H1 (cell line): ENCODE measurements at regions of chr7 and their contacts with region 1.

Region 1: DNA sequence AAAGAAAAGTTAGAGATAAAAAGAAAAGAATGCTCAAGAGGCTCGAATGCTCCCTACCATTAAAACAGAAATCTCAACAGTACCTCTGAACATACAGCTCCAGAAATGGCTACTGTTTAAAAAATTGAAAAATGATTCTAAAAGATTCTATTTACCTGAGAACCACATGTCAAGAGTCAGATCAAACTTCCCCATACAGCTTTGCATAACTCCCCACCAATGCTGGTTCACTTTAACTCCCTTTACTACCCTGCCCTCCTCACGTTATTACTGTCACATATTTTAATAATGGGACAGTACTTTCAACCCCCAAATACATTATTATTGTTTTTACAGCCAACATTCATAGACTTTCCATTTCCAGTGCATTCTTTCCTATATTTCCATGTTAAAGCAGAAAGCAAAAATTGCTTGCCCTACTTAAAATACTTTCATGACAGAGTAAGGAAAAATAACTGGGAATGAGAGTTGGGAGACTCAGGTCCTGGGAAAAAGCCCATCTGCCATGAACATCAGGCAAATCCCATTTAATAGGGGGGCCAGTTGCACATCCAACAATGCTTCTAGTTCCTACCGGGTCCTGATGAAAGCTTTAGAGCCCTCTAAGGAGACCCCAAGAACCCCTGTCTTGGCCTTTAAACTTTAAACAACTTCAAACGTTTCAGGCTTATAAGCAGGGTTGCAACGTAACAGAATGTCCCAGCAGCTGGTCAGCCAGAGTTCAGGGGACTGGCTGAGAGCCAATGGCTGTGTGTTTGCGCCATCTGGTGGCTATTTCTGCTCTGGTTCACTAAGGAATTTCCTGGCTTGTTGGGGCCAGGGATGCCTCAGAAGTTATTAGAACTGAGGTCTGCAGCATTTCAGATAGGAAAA is 247.4 kb downstream of the ELMO1 start:
- DNase-seq: peak in 1 of 2 experiments; percentile 88
- H3K4me3 ChIP-seq: no peak overlapping the region
- H3K27ac ChIP-seq: no peak overlapping the region
- H3K4me1 ChIP-seq: no peaks in the 10 kb centered on the region; a peak in 1 of 7 replicates
- H3K27me3 ChIP-seq: no peaks in the 10 kb centered on the region
- CTCF ChIP-seq: peak; percentile 81 to 92 (median 86)
- EP300 ChIP-seq: no peak
- POLR2A ChIP-seq: no peak
- RAD21 ChIP-seq: peak; percentile 86 to 92

Region 2: DNA sequence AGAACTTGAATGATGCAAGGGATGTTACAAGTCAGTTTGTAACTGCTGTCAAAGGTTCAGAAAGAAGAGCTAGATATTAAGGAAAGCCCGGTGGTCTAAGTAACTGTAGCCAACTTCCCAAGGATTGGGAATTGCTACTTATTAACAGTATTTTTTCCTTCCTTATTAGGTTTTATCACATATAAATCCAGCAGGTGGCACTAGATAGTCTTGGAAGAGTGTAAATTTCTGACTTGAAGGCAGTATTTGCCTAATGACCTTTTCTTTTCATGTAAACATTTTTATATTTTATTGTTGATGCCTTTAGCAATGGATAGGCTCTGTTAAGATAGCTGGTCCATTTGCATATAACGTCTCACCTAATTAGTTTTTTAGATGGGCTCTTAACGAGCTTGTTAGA is 760.4 kb before region 1 on chr7:
- CTCF ChIA-PET with region 1: interaction called, 14 read pairs
- POLR2A ChIA-PET with region 1: no interaction called
- DNase-seq: no peak
- H3K4me3 ChIP-seq: no peak overlapping the region
- H3K27ac ChIP-seq: no peak overlapping the region
- H3K4me1 ChIP-seq: peaks cover 0 to 4% (median 0%) of the 10 kb centered on the region in 4 experiments; a peak in 2 of 7 replicates
- H3K27me3 ChIP-seq: no peaks in the 10 kb centered on the region
- CTCF ChIP-seq: peak in 1 of 3 experiments; percentile 45; a peak in 2 of 4 replicates
- EP300 ChIP-seq: no peak
- POLR2A ChIP-seq: no peak
- RAD21 ChIP-seq: peak in 1 of 2 experiments; percentile 33; a peak in 3 of 4 replicates

Region 3: DNA sequence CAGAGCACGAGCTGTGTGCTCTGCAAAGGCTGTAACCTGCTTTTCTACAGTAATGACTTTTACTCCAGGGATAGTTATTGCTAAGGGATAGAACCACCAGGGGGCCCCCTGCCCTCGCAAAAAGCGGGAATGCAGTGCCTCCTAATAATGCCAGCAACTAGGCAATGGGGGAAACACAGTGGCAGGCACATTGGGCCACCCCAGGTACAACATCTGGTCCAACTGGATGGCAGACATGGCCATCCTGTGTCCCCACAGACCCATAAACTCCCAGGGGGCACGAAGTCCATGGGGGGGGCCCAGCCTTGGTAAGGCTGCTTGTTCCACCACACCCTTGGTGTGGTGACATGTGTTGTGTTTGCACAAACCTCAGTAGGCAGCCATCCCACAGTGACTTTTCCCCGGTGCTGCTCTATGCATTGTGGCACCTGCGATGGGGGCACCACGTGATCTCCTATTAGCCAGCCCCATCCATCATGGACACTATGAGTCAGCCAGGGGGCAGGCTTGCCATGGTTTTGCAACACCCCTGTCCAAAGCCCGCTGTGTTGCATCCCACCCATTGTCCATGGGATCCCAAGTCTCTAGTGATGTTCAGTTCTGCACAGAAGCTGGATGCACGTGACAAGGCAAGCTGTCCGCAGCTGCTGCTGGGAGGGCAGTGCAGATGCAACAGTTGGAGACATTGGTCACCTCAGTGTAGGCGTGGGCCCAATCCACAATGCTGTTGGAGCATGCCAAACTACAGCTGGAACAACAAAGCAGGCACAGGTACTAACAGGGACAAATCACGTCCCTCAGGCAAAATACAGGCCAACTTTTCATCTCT is 727.6 kb before region 1 on chr7:
- CTCF ChIA-PET with region 1: interaction called, 14 read pairs
- POLR2A ChIA-PET with region 1: no interaction called
- DNase-seq: peak in 1 of 2 experiments; percentile 89
- H3K4me3 ChIP-seq: no peak overlapping the region
- H3K27ac ChIP-seq: no peak overlapping the region
- H3K4me1 ChIP-seq: no peaks in the 10 kb centered on the region
- H3K27me3 ChIP-seq: no peaks in the 10 kb centered on the region
- CTCF ChIP-seq: peak; percentile 57 to 77 (median 71)
- EP300 ChIP-seq: no peak
- POLR2A ChIP-seq: no peak
- RAD21 ChIP-seq: peak; percentile 90 to 93

Region 4: DNA sequence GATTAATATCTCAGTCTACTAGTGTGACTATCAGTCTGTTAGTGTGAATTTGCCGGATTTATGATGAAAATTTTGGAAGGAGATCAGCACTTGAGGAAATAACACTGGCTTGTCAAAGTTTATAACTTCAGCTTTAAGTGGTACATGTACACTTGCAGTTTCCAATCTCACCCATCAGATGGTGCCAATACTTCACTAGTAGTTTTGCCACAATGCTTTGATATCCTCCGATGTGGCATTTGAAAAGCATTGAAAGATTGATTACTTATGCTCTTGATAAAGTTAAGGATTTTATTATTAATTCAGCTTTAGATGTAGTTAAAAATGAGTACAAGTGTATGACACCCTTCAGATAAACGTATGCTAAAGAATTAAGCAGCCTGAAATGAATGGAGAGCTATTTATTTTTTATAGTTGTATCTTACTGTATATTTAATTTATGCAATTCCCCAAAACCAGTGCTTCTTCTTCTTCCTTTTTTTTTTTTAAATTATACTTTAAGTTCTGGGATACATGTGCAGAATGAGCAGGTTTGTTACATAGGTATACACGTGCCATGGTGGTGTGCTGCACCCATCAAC is 713.4 kb before region 1 on chr7:
- CTCF ChIA-PET with region 1: interaction called, 11 read pairs
- POLR2A ChIA-PET with region 1: no interaction called
- DNase-seq: no peak
- H3K4me3 ChIP-seq: no peak overlapping the region
- H3K27ac ChIP-seq: no peak overlapping the region
- H3K4me1 ChIP-seq: no peaks in the 10 kb centered on the region
- H3K27me3 ChIP-seq: no peaks in the 10 kb centered on the region
- CTCF ChIP-seq: peak in 2 of 3 experiments; percentile 69 to 78; a peak in 3 of 4 replicates
- EP300 ChIP-seq: no peak
- POLR2A ChIP-seq: no peak
- RAD21 ChIP-seq: peak; percentile 96

Region 5: DNA sequence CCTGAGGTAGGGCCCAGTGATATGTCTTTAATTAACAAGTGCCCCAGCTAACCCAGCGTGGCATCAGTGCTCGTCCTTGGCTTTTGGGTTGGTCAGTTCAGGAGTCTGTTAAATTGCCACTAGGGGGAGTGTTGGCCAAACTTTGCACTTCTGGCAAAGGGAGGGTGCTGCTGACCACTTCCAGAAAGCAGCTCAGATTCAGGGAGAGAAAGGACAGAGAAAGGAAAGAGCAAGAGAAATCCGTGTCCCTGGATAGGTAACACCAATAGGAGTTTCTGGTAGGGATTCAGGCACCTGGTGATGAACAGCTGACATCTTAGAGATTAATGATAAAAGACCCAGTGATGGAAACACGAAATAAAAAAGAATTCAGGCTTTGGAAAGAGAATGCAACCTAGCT is 233.9 kb before region 1 on chr7:
- CTCF ChIA-PET with region 1: interaction called, 12 read pairs
- POLR2A ChIA-PET with region 1: no interaction called
- DNase-seq: peak in 1 of 2 experiments; percentile 47
- H3K4me3 ChIP-seq: no peak overlapping the region
- H3K27ac ChIP-seq: no peak overlapping the region
- H3K4me1 ChIP-seq: peaks cover 0 to 6% (median 2%) of the 10 kb centered on the region in 4 experiments; a peak in 4 of 7 replicates
- H3K27me3 ChIP-seq: no peaks in the 10 kb centered on the region
- CTCF ChIP-seq: peak; percentile 69 to 89 (median 85)
- EP300 ChIP-seq: no peak
- POLR2A ChIP-seq: no peak
- RAD21 ChIP-seq: peak; percentile 83 to 89

Region 6: DNA sequence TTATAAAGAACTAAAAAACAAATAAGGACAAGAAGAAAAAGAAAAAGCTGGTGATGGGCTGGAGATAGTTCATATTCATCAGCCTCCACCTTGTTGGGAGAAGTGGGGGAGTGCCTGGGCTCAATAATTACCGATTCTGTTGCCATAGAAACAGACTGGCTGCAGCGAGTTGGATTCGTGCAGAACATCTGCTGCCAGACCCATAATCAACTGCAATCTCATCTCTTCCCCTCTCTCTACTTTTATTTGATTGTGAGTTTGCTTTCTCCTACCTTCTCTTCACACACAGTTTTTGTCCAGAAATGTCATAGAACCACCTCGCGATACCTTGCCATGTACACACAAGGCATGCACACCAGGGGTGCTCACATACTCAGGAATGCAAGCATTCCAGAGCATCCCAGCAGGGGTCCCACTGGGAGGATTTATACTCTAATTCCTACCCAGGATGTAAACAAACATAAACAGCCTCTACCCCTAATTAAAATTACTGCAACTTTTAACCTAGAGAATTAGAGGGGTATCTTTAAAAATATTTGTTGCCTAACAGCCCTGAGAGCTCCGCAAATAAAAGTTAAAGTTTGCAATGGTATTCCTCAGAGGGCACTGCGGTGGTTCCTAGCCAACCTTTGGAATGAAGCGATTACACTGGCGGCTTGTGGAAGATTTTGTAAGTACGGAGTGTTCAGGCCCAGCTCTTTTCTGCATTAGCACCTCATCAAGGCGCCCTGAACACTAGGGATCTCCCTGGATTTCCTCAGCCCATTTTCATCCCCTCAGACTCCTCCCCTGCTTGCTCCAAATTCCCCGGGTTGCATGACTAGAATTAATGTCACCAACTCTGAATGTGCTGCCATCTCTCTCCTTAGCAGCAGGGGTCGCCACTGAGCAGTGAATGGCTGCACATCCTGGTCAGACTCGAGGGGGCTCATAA is 214.5 kb before region 1 on chr7:
- CTCF ChIA-PET with region 1: interaction called, 10 read pairs
- POLR2A ChIA-PET with region 1: no interaction called
- DNase-seq: peak; percentile 41 to 90
- H3K4me3 ChIP-seq: peak overlapping the region in 1 of 4 experiments; percentile 21; a peak in 1 of 8 replicates
- H3K27ac ChIP-seq: peak overlapping the region; percentile 72
- H3K4me1 ChIP-seq: peaks cover 0 to 14% (median 0%) of the 10 kb centered on the region in 4 experiments; a peak in 3 of 7 replicates
- H3K27me3 ChIP-seq: no peaks in the 10 kb centered on the region
- CTCF ChIP-seq: peak; percentile 75 to 91 (median 88)
- EP300 ChIP-seq: peak in 1 of 2 experiments; percentile 53; a peak in 1 of 3 replicates
- POLR2A ChIP-seq: no peak
- RAD21 ChIP-seq: peak; percentile 71 to 81

Region 7: DNA sequence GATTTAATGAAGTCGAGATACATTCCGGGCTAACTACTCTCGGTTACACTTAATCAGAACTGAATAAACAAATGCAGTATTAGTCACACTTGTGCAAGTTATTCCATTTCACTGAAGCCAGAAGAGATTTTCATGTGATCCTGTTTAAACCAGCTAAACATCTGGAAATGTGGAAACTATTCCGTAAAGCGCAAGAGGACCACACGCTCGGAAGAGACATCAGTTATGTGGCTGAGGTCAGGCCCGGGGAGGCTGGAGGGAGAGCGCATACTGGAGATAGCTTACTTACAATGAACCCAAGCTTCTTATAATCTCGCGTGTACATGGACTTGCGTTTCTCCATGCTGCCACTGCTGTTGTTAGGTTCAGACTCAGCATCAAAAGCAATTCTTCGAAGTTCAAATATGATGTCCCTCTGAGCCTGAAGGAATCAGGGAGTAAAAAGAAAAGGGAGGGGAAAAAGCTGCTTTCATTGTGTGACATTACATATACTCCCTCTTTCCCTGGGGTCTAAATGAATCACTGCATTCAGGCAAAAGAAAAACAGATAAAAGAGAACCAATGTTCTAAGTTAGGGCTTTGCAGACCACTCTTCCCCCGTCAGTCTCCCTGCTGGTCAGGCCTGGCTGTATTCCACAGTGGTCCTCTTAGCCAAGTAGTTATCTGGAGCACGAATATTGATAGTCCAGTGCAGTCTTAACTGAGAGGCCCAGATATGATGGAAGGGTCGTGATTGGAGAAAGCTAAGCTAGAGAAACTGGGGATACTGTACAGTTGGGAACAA is 10.1 kb after region 1 on chr7:
- CTCF ChIA-PET with region 1: interaction called, 10 read pairs
- POLR2A ChIA-PET with region 1: no interaction called
- DNase-seq: no peak
- H3K4me3 ChIP-seq: no peak overlapping the region
- H3K27ac ChIP-seq: no peak overlapping the region
- H3K4me1 ChIP-seq: peaks cover 2 to 10% (median 7%) of the 10 kb centered on the region in 4 experiments; a peak in 6 of 7 replicates
- H3K27me3 ChIP-seq: no peaks in the 10 kb centered on the region
- CTCF ChIP-seq: no peak
- EP300 ChIP-seq: no peak
- POLR2A ChIP-seq: no peak
- RAD21 ChIP-seq: no peak